ENCODE measurements at regions of chr16 and their contacts with region 1.

Region 1: GRCh38 chr16:71214746-71215381 is 15.7 kb downstream of the HYDIN start:
- DNase-seq: peak in 1 of 2 donors; percentile 2
- ATAC-seq: peak in 1 of 3 donors; percentile 45
- H3K4me3 ChIP-seq: no peak overlapping the region
- H3K4me3 Mint-ChIP-seq: no peak overlapping the region
- H3K27ac ChIP-seq: no peak overlapping the region
- H3K27ac Mint-ChIP-seq: no peak overlapping the region
- H3K4me1 ChIP-seq: no peaks in the 10 kb centered on the region
- H3K4me1 Mint-ChIP-seq: no peaks in the 10 kb centered on the region
- H3K27me3 ChIP-seq: no peaks in the 10 kb centered on the region
- H3K27me3 Mint-ChIP-seq: peaks cover 26 to 65% of the 10 kb centered on the region in 2 donors
- CTCF ChIP-seq: peak; percentile 41

Region 2: DNA sequence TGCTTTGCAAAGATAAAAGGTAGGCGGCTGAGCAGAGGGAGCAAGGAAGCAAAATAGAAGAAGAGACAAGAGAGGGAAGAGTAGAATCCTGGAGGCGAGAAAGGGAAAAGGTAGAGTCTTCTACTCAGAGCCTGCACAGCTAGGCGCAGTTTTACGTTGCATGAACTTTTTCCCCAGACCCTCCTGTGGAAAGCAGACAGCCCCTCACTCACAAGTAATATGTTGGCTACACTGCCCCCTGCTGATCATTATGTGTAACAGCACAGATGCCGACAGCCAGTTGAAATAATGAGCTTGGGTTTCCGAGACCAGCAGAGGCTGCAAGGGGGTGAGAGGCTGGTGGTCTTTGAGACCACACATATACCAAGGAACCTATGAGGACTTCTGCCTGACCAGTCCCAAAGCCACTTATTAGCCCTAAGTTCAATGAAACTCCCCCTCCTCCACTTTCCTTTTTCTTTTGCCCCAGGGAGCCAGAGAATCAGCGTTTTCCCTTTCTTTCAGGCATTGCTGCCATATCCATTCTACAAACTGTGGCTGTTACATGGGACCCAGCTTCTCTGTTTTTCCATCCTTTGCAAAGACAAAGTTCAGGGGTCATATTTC is 96.8 kb after region 1 on chr16:
- intact Hi-C with region 1: loop called (anchors 1 kb)
- DNase-seq: peak in 1 of 2 donors; percentile 66
- ATAC-seq: peak; percentile 44 to 67 (median 52)
- H3K4me3 ChIP-seq: no peak overlapping the region
- H3K4me3 Mint-ChIP-seq: no peak overlapping the region
- H3K27ac ChIP-seq: no peak overlapping the region
- H3K27ac Mint-ChIP-seq: no peak overlapping the region
- H3K4me1 ChIP-seq: no peaks in the 10 kb centered on the region
- H3K4me1 Mint-ChIP-seq: peaks cover 8 to 9% of the 10 kb centered on the region in 2 donors
- H3K27me3 ChIP-seq: peaks cover 7% of the 10 kb centered on the region
- H3K27me3 Mint-ChIP-seq: peaks cover 42 to 72% of the 10 kb centered on the region in 2 donors
- CTCF ChIP-seq: peak; percentile 80

Region 3: GRCh38 chr16:71358464-71358998 is 143.7 kb after region 1 on chr16 and contains the start of gene CALB2:
- intact Hi-C with region 1: loop called (anchors 2 kb)
- DNase-seq: peak; percentile 69 to 71
- ATAC-seq: peak; percentile 83 to 98 (median 96)
- H3K4me3 ChIP-seq: no peak within 1 kb of the TSS
- H3K4me3 Mint-ChIP-seq: peak within 1 kb of the TSS; percentile 6
- H3K27ac ChIP-seq: no peak within 1 kb of the TSS
- H3K27ac Mint-ChIP-seq: no peak within 1 kb of the TSS
- H3K4me1 ChIP-seq: peaks cover 9% of the 10 kb centered on the region
- H3K4me1 Mint-ChIP-seq: peaks cover 0 to 9% of the 10 kb centered on the region in 2 donors
- H3K27me3 ChIP-seq: peaks cover 8% of the 10 kb centered on the region
- H3K27me3 Mint-ChIP-seq: peaks cover 8 to 14% of the 10 kb centered on the region in 2 donors
- CTCF ChIP-seq: peak; percentile 98
- total RNA-seq, gene CALB2: not detected

Region 4: GRCh38 chr16:71794943-71795342 is 580.1 kb after region 1 on chr16:
- intact Hi-C with region 1: no loop called
- DNase-seq: no peak
- ATAC-seq: no peak
- H3K4me3 ChIP-seq: no peak overlapping the region
- H3K4me3 Mint-ChIP-seq: peak overlapping the region; percentile 1
- H3K27ac ChIP-seq: no peak overlapping the region
- H3K27ac Mint-ChIP-seq: peak overlapping the region; percentile 81 to 90
- H3K4me1 ChIP-seq: peaks cover 30% of the 10 kb centered on the region
- H3K4me1 Mint-ChIP-seq: peaks cover 60 to 62% of the 10 kb centered on the region in 2 donors
- H3K27me3 ChIP-seq: no peaks in the 10 kb centered on the region
- H3K27me3 Mint-ChIP-seq: no peaks in the 10 kb centered on the region
- CTCF ChIP-seq: no peak

Measured in natural killer cell (primary cell).